Panc1 (cell line): ENCODE measurements at regions of chr10 and their contacts with region 1.

Region 1: DNA sequence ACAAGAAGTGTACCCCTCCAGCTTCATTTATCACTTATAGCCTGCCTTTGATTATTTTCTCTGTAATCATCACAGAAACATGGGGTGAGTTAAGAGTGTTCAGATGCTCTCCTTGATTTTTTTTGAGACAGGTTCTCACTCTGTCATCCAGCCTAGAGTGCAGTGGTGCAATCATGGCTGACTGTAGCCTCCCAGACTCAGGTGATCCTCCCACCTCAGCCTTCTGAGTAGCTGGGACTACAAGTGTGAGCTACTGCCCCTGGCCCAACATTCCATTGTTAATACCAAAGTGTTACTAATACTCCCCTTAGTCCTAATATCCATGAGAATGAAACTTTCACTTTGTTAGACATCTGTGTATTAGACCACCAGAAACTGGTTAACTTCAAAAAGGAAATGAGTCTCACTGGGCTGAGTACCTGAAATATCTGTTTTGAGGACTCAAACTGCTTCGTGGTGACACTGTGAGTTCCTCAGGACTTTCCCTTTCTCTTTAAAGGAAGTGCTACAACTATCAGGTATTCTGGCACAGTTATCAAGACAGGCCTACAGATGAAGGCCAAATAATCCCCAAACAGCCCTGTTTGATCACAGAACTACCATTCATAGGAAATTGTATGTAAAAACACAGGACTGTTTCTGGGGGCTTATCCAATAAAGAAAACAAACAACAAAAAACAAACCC is 20.5 kb upstream of the CFAP70 start:
- DNase-seq: no peak
- ATAC-seq: no peak
- H3K4me3 ChIP-seq: no peak overlapping the region
- H3K27ac ChIP-seq: no peak overlapping the region
- H3K4me1 ChIP-seq: no peaks in the 10 kb centered on the region
- H3K27me3 ChIP-seq: no peaks in the 10 kb centered on the region
- CTCF ChIP-seq: no peak

Region 2: GRCh38 chr10:73366381-73367298 is 12.6 kb before region 1 on chr10:
- CTCF ChIA-PET with region 1: no interaction called
- POLR2A ChIA-PET with region 1: no interaction called
- in situ Hi-C with region 1: no loop called
- intact Hi-C with region 1: no loop called
- DNase-seq: no peak
- ATAC-seq: peak; percentile 14; the same call in 1 of the 2 replicates
- H3K4me3 ChIP-seq: no peak overlapping the region
- H3K27ac ChIP-seq: no peak overlapping the region
- H3K4me1 ChIP-seq: no peaks in the 10 kb centered on the region
- H3K27me3 ChIP-seq: no peaks in the 10 kb centered on the region
- CTCF ChIP-seq: no peak

Region 3: GRCh38 chr10:73410897-73411296 is 31.7 kb after region 1 on chr10:
- CTCF ChIA-PET with region 1: no interaction called
- POLR2A ChIA-PET with region 1: interaction called, 15 read pairs
- in situ Hi-C with region 1: no loop called
- intact Hi-C with region 1: no loop called
- DNase-seq: no peak
- ATAC-seq: no peak
- H3K4me3 ChIP-seq: no peak overlapping the region
- H3K27ac ChIP-seq: no peak overlapping the region
- H3K4me1 ChIP-seq: peaks cover 6% of the 10 kb centered on the region; the same call in 1 of the 2 replicates
- H3K27me3 ChIP-seq: no peaks in the 10 kb centered on the region
- CTCF ChIP-seq: no peak